Panc1 (cell line): ENCODE measurements at regions of chr3 and their contacts with region 1.

Region 1: GRCh38 chr3:150703299-150704134 is at the start of gene ERICH6:
- DNase-seq: peak; percentile 61
- ATAC-seq: peak; percentile 98
- H3K4me3 ChIP-seq: peak within 1 kb of the TSS; percentile 70 to 82
- H3K27ac ChIP-seq: peak within 1 kb of the TSS; percentile 92
- H3K4me1 ChIP-seq: 0 out of 2 replicates have a peak, but pooled peaks cover 6% of the 10 kb centered on the region
- H3K27me3 ChIP-seq: no peaks in the 10 kb centered on the region
- CTCF ChIP-seq: no peak
- total RNA-seq, gene ERICH6: 0.28 TPM

Region 2: GRCh38 chr3:150603153-150603979 is 100.2 kb before region 1 on chr3 and contains the start of gene SELENOT:
- CTCF ChIA-PET with region 1: no interaction called
- POLR2A ChIA-PET with region 1: interaction called, 14 read pairs
- in situ Hi-C with region 1: no loop called
- intact Hi-C with region 1: loop called (anchors 5 kb)
- DNase-seq: peak; percentile 93
- ATAC-seq: peak; percentile 93
- H3K4me3 ChIP-seq: peak within 1 kb of the TSS; percentile 83 to 91
- H3K27ac ChIP-seq: peak within 1 kb of the TSS; percentile 95
- H3K4me1 ChIP-seq: peaks cover 35% of the 10 kb centered on the region
- H3K27me3 ChIP-seq: no peaks in the 10 kb centered on the region
- CTCF ChIP-seq: no peak
- total RNA-seq, gene SELENOT: 114 TPM

Region 3: GRCh38 chr3:151067158-151067557 is 363.6 kb after region 1 on chr3:
- CTCF ChIA-PET with region 1: no interaction called
- POLR2A ChIA-PET with region 1: no interaction called
- in situ Hi-C with region 1: no loop called
- intact Hi-C with region 1: no loop called
- DNase-seq: no peak
- ATAC-seq: peak; percentile 73
- H3K4me3 ChIP-seq: no peak overlapping the region
- H3K27ac ChIP-seq: no peak overlapping the region
- H3K4me1 ChIP-seq: no peaks in the 10 kb centered on the region
- H3K27me3 ChIP-seq: peaks cover 6% of the 10 kb centered on the region; the same call in 1 of the 2 replicates
- CTCF ChIP-seq: peak; percentile 82